ENCODE measurements at regions of chr21 and their contacts with region 1.

Region 1: GRCh38 chr21:25734904-25735645 is at the starts of genes ATP5PF and GABPA:
- DNase-seq: peak; percentile 89 to 99 (median 91)
- ATAC-seq: peak; percentile 88
- H3K4me3 ChIP-seq: peak within 1 kb of the TSS; percentile 93
- H3K27ac ChIP-seq: peak within 1 kb of the TSS; percentile 98
- H3K4me1 ChIP-seq: peaks cover 7 to 21% of the 10 kb centered on the region in 2 experiments; a peak in 4 of 5 replicates
- H3K27me3 ChIP-seq: no peaks in the 10 kb centered on the region; a peak in 1 of 5 replicates
- CTCF ChIP-seq: peak in 1 of 3 experiments; percentile 3; a peak in 2 of 6 replicates
- EP300 ChIP-seq: peak; percentile 69
- POLR2A ChIP-seq: peak; percentile 85
- RAD21 ChIP-seq: no peak
- polyA plus RNA-seq, gene ATP5PF: 2,105 to 2,488 TPM
- polyA plus RNA-seq, gene GABPA: 8.9 to 13.2 TPM

Region 2: GRCh38 chr21:25717491-25718147 is 17.5 kb before region 1 on chr21:
- CTCF ChIA-PET with region 1: no interaction called
- POLR2A ChIA-PET with region 1: interaction called, 10 read pairs
- in situ Hi-C with region 1: no loop called
- intact Hi-C with region 1: no loop called
- DNase-seq: peak; percentile 44 to 77 (median 56)
- ATAC-seq: peak; percentile 85
- H3K4me3 ChIP-seq: no peak overlapping the region
- H3K27ac ChIP-seq: peak overlapping the region; percentile 10; the same call in 2 of the 3 replicates
- H3K4me1 ChIP-seq: peaks cover 0 to 9% of the 10 kb centered on the region in 2 experiments; a peak in 3 of 5 replicates
- H3K27me3 ChIP-seq: no peaks in the 10 kb centered on the region
- CTCF ChIP-seq: no peak
- EP300 ChIP-seq: no peak
- POLR2A ChIP-seq: no peak
- RAD21 ChIP-seq: no peak

Region 3: GRCh38 chr21:25772686-25773085 is 37.6 kb after region 1 on chr21:
- CTCF ChIA-PET with region 1: no interaction called
- POLR2A ChIA-PET with region 1: no interaction called
- in situ Hi-C with region 1: no loop called
- intact Hi-C with region 1: no loop called
- DNase-seq: no peak
- ATAC-seq: no peak
- H3K4me3 ChIP-seq: no peak overlapping the region
- H3K27ac ChIP-seq: no peak overlapping the region
- H3K4me1 ChIP-seq: no peaks in the 10 kb centered on the region
- H3K27me3 ChIP-seq: no peaks in the 10 kb centered on the region; a peak in 1 of 5 replicates
- CTCF ChIP-seq: no peak
- EP300 ChIP-seq: no peak
- POLR2A ChIP-seq: no peak
- RAD21 ChIP-seq: no peak

Region 4: GRCh38 chr21:26226724-26227509 is 491.8 kb after region 1 on chr21:
- CTCF ChIA-PET with region 1: no interaction called
- POLR2A ChIA-PET with region 1: no interaction called
- in situ Hi-C with region 1: no loop called
- intact Hi-C with region 1: no loop called
- DNase-seq: no peak
- ATAC-seq: no peak
- H3K4me3 ChIP-seq: no peak overlapping the region
- H3K27ac ChIP-seq: no peak overlapping the region
- H3K4me1 ChIP-seq: no peaks in the 10 kb centered on the region
- H3K27me3 ChIP-seq: no peaks in the 10 kb centered on the region
- CTCF ChIP-seq: no peak
- EP300 ChIP-seq: no peak
- POLR2A ChIP-seq: no peak
- RAD21 ChIP-seq: no peak

Measured in K562 (cell line).